GM12878 (cell line): ENCODE measurements at regions of chr1 and their contacts with region 1.

Region 1: DNA sequence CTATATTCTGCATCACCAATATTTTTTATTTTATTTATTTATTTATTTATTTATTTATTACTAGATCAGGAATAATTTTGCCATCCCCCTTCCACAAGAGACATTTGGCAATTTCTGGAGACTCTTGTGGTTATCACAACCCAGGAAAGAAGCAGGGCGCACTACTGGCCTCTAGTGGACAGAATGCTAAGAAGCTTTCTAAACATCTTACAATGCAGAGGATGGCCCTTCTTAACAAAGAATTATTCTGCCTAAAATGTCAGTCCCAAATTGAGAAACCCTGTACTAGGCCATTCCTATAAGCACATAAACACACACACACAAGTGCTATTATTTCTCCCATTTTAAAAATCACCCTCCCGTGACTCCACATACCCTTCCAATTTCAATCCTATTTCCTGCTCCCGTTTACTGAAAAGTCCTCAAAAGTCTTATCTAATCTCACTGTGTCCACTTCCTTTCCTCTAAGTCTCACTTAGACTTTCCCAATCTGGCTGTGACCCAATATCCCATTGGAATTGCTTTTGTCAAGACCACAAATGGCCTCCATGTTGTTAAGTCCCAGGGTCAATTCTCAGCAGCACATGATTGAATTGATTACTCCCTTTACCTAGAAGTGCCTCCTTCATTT is 43.7 kb upstream of the RNF11 start:
- DNase-seq: no peak
- ATAC-seq: peak; percentile 78
- H3K4me3 ChIP-seq: no peak overlapping the region
- H3K27ac ChIP-seq: no peak overlapping the region
- H3K4me1 ChIP-seq: no peaks in the 10 kb centered on the region
- H3K27me3 ChIP-seq: no peaks in the 10 kb centered on the region
- CTCF ChIP-seq: peak; percentile 74 to 90 (median 80)
- EP300 ChIP-seq: no peak
- POLR2A ChIP-seq: no peak
- RAD21 ChIP-seq: peak; percentile 89

Region 2: GRCh38 chr1:50710093-50710492 is 482.2 kb before region 1 on chr1:
- CTCF ChIA-PET with region 1: no interaction called
- POLR2A ChIA-PET with region 1: no interaction called
- RAD21 ChIA-PET with region 1: no interaction called
- SMC1A ChIA-PET with region 1: no interaction called
- in situ Hi-C with region 1: no loop called
- intact Hi-C with region 1: no loop called
- DNase-seq: no peak
- ATAC-seq: no peak
- H3K4me3 ChIP-seq: no peak overlapping the region
- H3K27ac ChIP-seq: no peak overlapping the region
- H3K4me1 ChIP-seq: no peaks in the 10 kb centered on the region
- H3K27me3 ChIP-seq: no peaks in the 10 kb centered on the region
- CTCF ChIP-seq: no peak
- EP300 ChIP-seq: no peak
- POLR2A ChIP-seq: no peak
- RAD21 ChIP-seq: no peak

Region 3: GRCh38 chr1:50774759-50775351 is 417.5 kb before region 1 on chr1:
- CTCF ChIA-PET with region 1: interaction called, 139 read pairs
- POLR2A ChIA-PET with region 1: no interaction called
- RAD21 ChIA-PET with region 1: interaction called, 68 read pairs
- SMC1A ChIA-PET with region 1: interaction called, 58 read pairs
- in situ Hi-C with region 1: loop called (anchors 5 kb)
- intact Hi-C with region 1: loop called (anchors 2 kb)
- DNase-seq: peak; percentile 11
- ATAC-seq: peak; percentile 79
- H3K4me3 ChIP-seq: no peak overlapping the region
- H3K27ac ChIP-seq: no peak overlapping the region
- H3K4me1 ChIP-seq: no peaks in the 10 kb centered on the region
- H3K27me3 ChIP-seq: no peaks in the 10 kb centered on the region
- CTCF ChIP-seq: peak; percentile 50 to 65 (median 53)
- EP300 ChIP-seq: no peak
- POLR2A ChIP-seq: no peak
- RAD21 ChIP-seq: peak; percentile 79

Region 4: GRCh38 chr1:50893466-50893865 is 298.9 kb before region 1 on chr1:
- CTCF ChIA-PET with region 1: no interaction called
- POLR2A ChIA-PET with region 1: no interaction called
- RAD21 ChIA-PET with region 1: no interaction called
- SMC1A ChIA-PET with region 1: no interaction called
- in situ Hi-C with region 1: no loop called
- intact Hi-C with region 1: no loop called
- DNase-seq: no peak
- ATAC-seq: no peak
- H3K4me3 ChIP-seq: no peak overlapping the region
- H3K27ac ChIP-seq: no peak overlapping the region
- H3K4me1 ChIP-seq: no peaks in the 10 kb centered on the region
- H3K27me3 ChIP-seq: no peaks in the 10 kb centered on the region
- CTCF ChIP-seq: no peak
- EP300 ChIP-seq: no peak
- POLR2A ChIP-seq: no peak
- RAD21 ChIP-seq: no peak

Region 5: GRCh38 chr1:50929376-50929958 is 262.9 kb before region 1 on chr1:
- CTCF ChIA-PET with region 1: interaction called, 87 read pairs
- POLR2A ChIA-PET with region 1: no interaction called
- RAD21 ChIA-PET with region 1: interaction called, 33 read pairs
- SMC1A ChIA-PET with region 1: interaction called, 44 read pairs
- in situ Hi-C with region 1: no loop called
- intact Hi-C with region 1: loop called (anchors 5 kb)
- DNase-seq: no peak
- ATAC-seq: no peak; the same call in 2 of the 3 replicates
- H3K4me3 ChIP-seq: no peak overlapping the region
- H3K27ac ChIP-seq: no peak overlapping the region
- H3K4me1 ChIP-seq: peaks cover 3% of the 10 kb centered on the region
- H3K27me3 ChIP-seq: no peaks in the 10 kb centered on the region
- CTCF ChIP-seq: peak; percentile 29 to 53 (median 45); a peak in 4 of 6 replicates
- EP300 ChIP-seq: no peak
- POLR2A ChIP-seq: no peak
- RAD21 ChIP-seq: peak; percentile 52

Region 6: DNA sequence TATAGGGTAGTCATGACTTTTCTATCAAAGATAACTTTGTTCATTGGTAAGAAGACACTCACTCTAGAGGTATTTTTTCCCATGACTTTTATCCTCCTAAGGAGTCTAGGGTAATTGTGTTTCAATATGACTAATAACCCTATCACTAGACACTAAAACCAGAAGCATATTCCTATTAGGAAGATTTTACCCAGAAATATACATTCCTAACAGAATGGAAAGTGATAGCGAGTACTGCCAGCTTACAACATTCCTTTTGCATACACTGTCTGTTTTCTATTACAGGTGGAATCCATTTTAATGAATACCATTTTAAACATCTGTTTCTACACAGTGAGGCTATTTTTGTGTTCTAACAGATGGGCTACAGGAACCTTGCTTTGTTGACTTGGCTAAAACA is 121.7 kb before region 1 on chr1:
- CTCF ChIA-PET with region 1: no interaction called
- POLR2A ChIA-PET with region 1: no interaction called
- RAD21 ChIA-PET with region 1: no interaction called
- SMC1A ChIA-PET with region 1: no interaction called
- in situ Hi-C with region 1: no loop called
- intact Hi-C with region 1: no loop called
- DNase-seq: no peak
- ATAC-seq: no peak
- H3K4me3 ChIP-seq: no peak overlapping the region
- H3K27ac ChIP-seq: no peak overlapping the region
- H3K4me1 ChIP-seq: no peaks in the 10 kb centered on the region
- H3K27me3 ChIP-seq: no peaks in the 10 kb centered on the region
- CTCF ChIP-seq: no peak
- EP300 ChIP-seq: no peak
- POLR2A ChIP-seq: no peak
- RAD21 ChIP-seq: no peak

Region 7: DNA sequence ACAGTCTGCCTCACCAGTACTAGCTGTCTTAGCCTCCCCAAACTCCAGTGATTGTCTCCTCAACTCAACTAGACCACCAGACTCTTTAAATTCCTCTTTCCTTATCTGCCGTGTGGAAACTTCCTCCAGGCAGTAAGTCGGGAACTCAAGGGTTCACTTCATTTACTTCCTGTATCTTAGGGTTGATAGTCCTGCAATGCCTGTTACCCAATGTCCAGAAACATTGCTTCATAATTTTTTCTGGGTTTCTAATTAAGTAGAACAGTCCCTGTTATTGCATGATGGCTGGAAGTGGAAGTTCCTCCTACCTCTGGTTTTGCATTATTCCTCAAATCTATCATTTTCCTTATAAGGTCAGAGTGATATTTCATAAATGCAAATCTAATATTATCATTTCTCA is 17.1 kb before region 1 on chr1:
- CTCF ChIA-PET with region 1: interaction called, 54 read pairs
- POLR2A ChIA-PET with region 1: no interaction called
- RAD21 ChIA-PET with region 1: interaction called, 6 read pairs
- SMC1A ChIA-PET with region 1: interaction called, 16 read pairs
- in situ Hi-C with region 1: no loop called
- intact Hi-C with region 1: no loop called
- DNase-seq: no peak
- ATAC-seq: no peak
- H3K4me3 ChIP-seq: no peak overlapping the region
- H3K27ac ChIP-seq: no peak overlapping the region
- H3K4me1 ChIP-seq: peaks cover 3% of the 10 kb centered on the region; the same call in 1 of the 2 replicates
- H3K27me3 ChIP-seq: no peaks in the 10 kb centered on the region; a peak in 1 of 4 replicates
- CTCF ChIP-seq: no peak
- EP300 ChIP-seq: no peak
- POLR2A ChIP-seq: no peak
- RAD21 ChIP-seq: no peak

Region 8: GRCh38 chr1:51289676-51290488 is 97.6 kb after region 1 on chr1:
- CTCF ChIA-PET with region 1: interaction called, 93 read pairs
- POLR2A ChIA-PET with region 1: no interaction called
- RAD21 ChIA-PET with region 1: no interaction called
- SMC1A ChIA-PET with region 1: interaction called, 8 read pairs
- in situ Hi-C with region 1: no loop called
- intact Hi-C with region 1: no loop called
- DNase-seq: no peak
- ATAC-seq: no peak
- H3K4me3 ChIP-seq: no peak overlapping the region
- H3K27ac ChIP-seq: no peak overlapping the region
- H3K4me1 ChIP-seq: peaks cover 9% of the 10 kb centered on the region
- H3K27me3 ChIP-seq: no peaks in the 10 kb centered on the region
- CTCF ChIP-seq: no peak
- EP300 ChIP-seq: no peak
- POLR2A ChIP-seq: no peak
- RAD21 ChIP-seq: no peak

Region 9: GRCh38 chr1:51303751-51304251 is 111.5 kb after region 1 on chr1:
- CTCF ChIA-PET with region 1: interaction called, 16 read pairs
- POLR2A ChIA-PET with region 1: no interaction called
- RAD21 ChIA-PET with region 1: interaction called, 3 read pairs
- SMC1A ChIA-PET with region 1: interaction called, 4 read pairs
- in situ Hi-C with region 1: no loop called
- intact Hi-C with region 1: no loop called
- DNase-seq: peak; percentile 32
- ATAC-seq: peak; percentile 69
- H3K4me3 ChIP-seq: peak overlapping the region; percentile 0; the same call in 1 of the 2 replicates
- H3K27ac ChIP-seq: peak overlapping the region; percentile 69
- H3K4me1 ChIP-seq: peaks cover 52% of the 10 kb centered on the region
- H3K27me3 ChIP-seq: no peaks in the 10 kb centered on the region
- CTCF ChIP-seq: no peak
- EP300 ChIP-seq: no peak
- POLR2A ChIP-seq: no peak
- RAD21 ChIP-seq: 0 out of 2 replicates have a peak, but pooled peaks have one; percentile 2